ENCODE measurements at regions of chr10 and their contacts with region 1.

Region 1: DNA sequence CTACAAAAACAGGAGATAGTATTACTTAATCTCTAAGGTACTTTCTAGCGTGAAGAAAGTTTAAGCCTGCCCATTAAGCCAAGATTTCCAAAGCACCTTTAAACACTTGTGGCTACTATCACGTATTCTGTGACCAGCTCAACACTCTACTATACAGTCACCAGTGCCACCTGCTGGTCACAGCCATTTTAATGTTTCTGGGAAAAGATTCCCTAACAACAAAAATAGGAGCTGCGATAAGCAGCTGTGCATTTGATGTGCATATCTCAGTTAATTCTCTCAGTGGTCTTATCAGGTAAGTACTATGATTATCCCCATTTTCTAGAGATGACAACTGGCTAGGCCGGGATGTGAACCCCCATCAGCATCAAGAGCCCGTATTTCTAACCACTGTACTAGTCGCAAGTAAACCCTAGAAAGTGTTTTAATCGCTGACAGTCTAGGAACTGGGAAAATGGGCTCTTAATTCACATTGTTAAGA is 860 bp downstream of the SEC31B start:
- DNase-seq: peak; percentile 69 to 71
- H3K4me3 ChIP-seq: peak overlapping the region; percentile 39 to 54
- H3K27ac ChIP-seq: no peak overlapping the region
- H3K4me1 ChIP-seq: peaks cover 0 to 14% (median 12%) of the 10 kb centered on the region in 4 donors
- H3K27me3 ChIP-seq: no peaks in the 10 kb centered on the region
- CTCF ChIP-seq: peak; percentile 69 to 71

Region 2: DNA sequence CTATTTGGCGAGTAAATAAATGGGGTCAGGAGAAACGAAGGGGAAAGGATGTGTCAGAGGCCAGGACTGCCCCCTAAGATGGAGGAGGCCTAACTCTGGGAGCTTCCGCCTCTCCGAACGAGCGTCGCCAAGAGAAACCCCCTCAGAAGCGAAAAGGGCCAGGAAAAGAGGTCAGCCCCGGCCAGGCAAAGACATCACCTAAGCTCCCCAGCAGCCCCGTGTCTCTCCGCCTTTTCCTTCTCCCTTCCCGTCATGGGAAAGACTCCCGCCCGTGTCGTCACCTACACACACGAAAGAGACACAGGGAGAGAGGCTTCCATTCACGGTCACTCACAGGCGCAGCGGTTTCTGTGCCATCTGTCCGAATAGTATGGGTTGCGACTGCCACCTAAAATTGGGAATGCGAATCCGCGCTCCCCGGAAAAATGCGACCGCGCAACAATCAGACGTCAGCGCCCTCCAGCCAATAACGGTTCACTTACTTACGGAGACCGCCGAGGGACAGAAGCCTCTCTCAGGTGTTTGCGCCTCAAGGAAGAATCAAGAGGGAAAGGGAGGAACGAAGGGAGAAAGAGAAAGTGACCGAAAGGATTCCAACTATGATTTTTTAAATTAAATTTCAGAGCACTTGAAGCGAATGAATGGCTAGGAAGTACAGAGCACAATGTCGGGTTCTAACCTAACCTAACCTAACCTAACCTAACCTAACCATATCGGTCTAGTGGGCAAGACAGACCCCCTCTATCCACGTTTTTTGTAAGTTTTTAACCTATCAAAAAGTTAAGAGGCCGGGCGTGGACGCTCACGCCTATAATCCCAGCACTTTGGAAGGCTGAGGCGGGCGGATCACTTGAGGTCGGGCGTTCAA is 251.3 kb before region 1 on chr10 and contains the start of gene CWF19L1:
- intact Hi-C with region 1: no loop called
- DNase-seq: peak; percentile 81 to 90
- H3K4me3 ChIP-seq: peak within 1 kb of the TSS; percentile 70 to 99
- H3K27ac ChIP-seq: peak within 1 kb of the TSS; percentile 78 to 83
- H3K4me1 ChIP-seq: peaks cover 0 to 22% (median 14%) of the 10 kb centered on the region in 4 donors
- H3K27me3 ChIP-seq: no peaks in the 10 kb centered on the region
- CTCF ChIP-seq: no peak

Region 3: GRCh38 chr10:100338434-100339036 is 180.3 kb before region 1 on chr10:
- intact Hi-C with region 1: loop called (anchors 5 kb)
- DNase-seq: peak; percentile 76 to 78
- H3K4me3 ChIP-seq: no peak overlapping the region
- H3K27ac ChIP-seq: no peak overlapping the region
- H3K4me1 ChIP-seq: peaks cover 0 to 9% (median 0%) of the 10 kb centered on the region in 4 donors
- H3K27me3 ChIP-seq: peaks cover 0 to 18% of the 10 kb centered on the region in 2 donors
- CTCF ChIP-seq: peak; percentile 91 to 93

Region 4: DNA sequence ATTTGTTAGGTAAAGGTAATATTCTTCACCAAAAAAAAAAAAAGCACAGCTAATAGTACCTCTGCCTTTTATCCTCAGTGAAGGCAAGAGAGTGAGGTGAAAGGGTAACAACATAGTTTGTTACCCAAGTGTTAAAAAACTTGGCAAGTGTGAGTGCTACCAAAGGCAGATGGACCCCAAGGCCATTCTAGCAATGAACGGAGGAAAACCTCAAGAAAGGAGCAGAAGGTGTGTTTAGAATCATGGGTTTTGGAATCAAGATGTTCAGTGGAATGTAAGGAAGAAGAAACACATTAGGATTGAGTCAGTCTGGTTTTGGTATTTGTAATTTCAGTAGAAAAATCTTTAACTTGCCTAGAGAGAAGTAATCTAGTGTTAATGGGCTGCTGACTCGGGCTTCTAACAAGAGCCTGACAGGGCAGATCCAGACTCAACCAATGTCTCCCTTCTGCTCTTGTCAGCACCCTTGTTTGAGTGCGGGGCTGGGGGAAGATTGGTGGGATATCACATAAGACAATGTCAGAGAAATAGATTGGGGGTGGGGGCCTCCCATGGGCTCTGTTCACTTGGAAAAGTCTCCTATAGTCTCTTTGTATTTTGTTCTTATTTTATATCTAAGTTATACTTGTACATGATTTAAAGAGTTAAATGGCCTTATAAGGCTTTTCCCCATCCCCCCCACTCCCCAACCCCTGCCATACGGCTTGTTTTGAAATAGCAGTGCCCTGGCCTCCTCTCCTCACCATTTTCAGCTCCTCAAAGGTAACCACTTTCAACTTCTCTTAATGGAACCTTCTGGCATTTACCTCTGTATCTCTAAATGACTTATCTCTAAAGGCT is 127.4 kb before region 1 on chr10:
- intact Hi-C with region 1: no loop called
- DNase-seq: no peak
- H3K4me3 ChIP-seq: no peak overlapping the region
- H3K27ac ChIP-seq: no peak overlapping the region
- H3K4me1 ChIP-seq: no peaks in the 10 kb centered on the region
- H3K27me3 ChIP-seq: no peaks in the 10 kb centered on the region
- CTCF ChIP-seq: no peak

Region 5: GRCh38 chr10:100433253-100434240 is 85.3 kb before region 1 on chr10:
- intact Hi-C with region 1: loop called (anchors 5 kb)
- DNase-seq: peak; percentile 91 to 93
- H3K4me3 ChIP-seq: no peak overlapping the region
- H3K27ac ChIP-seq: no peak overlapping the region
- H3K4me1 ChIP-seq: no peaks in the 10 kb centered on the region
- H3K27me3 ChIP-seq: peaks cover 0 to 4% of the 10 kb centered on the region in 2 donors
- CTCF ChIP-seq: peak; percentile 95 to 100

Measured in tibial artery (tissue), 4 donors.